Psoas muscle (tissue), 8 donors: ENCODE measurements at regions of chr4 and their contacts with region 1.

Region 1: DNA sequence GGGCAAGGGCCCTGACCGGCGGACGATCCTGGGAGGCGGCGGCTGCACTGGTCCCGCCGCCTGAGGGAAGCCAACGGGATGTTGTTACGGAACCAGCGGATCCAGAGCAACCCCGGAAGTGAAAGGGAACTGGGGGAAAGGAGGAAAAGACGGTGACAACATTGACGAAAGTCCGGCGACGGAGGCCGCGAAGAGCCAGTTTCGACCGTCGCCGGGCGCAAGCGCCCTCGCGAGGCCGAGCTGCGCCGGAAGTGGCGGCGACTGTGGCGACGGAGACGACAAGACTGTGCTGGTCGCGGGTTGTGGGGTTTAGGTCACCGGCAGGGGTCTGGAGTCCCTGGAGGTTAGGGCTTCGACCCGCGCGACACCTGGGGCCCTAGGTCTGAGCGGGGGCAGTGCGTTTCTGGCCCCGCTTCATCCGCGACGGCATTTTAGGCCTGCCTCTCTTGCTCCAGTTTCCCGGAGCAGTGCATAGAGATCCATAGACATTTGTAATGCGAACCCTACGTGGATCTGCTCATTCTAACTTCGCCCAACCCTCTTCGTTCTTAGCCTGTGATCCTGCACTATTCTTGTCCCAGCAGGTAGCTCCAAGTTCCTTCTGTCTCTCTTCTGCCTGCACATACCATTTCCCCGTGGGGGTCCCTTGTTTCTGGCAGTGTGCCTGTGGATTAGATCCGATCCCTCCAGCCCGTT is at the start of gene BOD1L1:
- DNase-seq: peak; percentile 89 to 93
- ATAC-seq: peak; percentile 96 to 99 (median 98)
- H3K4me3 ChIP-seq: peak within 1 kb of the TSS; percentile 83
- H3K27ac ChIP-seq: peak within 1 kb of the TSS; percentile 99
- H3K4me1 ChIP-seq: peaks cover 27% of the 10 kb centered on the region
- H3K27me3 ChIP-seq: no peaks in the 10 kb centered on the region
- CTCF ChIP-seq: peak; percentile 45
- total RNA-seq, gene BOD1L1: 13.7 to 19.3 (median 15.6) TPM

Region 2: GRCh38 chr4:13484122-13484748 is 143.5 kb before region 1 on chr4 and contains the start of gene RAB28:
- intact Hi-C with region 1: loop called (anchors 10 kb)
- DNase-seq: peak; percentile 94 to 97
- ATAC-seq: peak; percentile 100
- H3K4me3 ChIP-seq: peak within 1 kb of the TSS; percentile 92
- H3K27ac ChIP-seq: peak within 1 kb of the TSS; percentile 90
- H3K4me1 ChIP-seq: peaks cover 22% of the 10 kb centered on the region
- H3K27me3 ChIP-seq: peaks cover 0 to 4% (median 0%) of the 10 kb centered on the region in 3 donors
- CTCF ChIP-seq: no peak
- total RNA-seq, gene RAB28: 5.1 to 6.9 (median 5.8) TPM

Region 3: DNA sequence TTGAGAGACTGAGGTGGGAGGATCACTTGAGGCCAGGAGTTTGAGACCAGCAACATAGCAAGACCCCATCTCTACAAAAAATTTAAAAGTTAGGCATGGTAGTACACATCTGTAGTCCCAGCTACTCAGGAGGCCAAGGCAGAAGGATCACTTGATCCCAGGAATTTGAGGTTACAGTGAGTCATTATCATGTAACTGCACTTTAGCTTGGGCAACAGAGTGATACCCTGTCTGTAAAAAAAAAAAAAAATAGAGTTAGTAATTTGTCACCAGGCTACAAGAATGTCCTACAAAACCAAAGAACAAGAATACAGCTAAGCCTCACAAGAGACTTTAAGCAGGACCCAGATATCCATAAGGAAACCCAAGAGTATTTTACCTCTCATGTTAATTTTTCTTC is 116.7 kb before region 1 on chr4:
- intact Hi-C with region 1: no loop called
- DNase-seq: no peak
- ATAC-seq: no peak
- H3K4me3 ChIP-seq: no peak overlapping the region
- H3K27ac ChIP-seq: no peak overlapping the region
- H3K4me1 ChIP-seq: no peaks in the 10 kb centered on the region
- H3K27me3 ChIP-seq: peaks cover 0 to 14% (median 4%) of the 10 kb centered on the region in 3 donors
- CTCF ChIP-seq: no peak